GM10248 (cell line): ENCODE measurements at regions of chr1 and their contacts with region 1.

Region 1: DNA sequence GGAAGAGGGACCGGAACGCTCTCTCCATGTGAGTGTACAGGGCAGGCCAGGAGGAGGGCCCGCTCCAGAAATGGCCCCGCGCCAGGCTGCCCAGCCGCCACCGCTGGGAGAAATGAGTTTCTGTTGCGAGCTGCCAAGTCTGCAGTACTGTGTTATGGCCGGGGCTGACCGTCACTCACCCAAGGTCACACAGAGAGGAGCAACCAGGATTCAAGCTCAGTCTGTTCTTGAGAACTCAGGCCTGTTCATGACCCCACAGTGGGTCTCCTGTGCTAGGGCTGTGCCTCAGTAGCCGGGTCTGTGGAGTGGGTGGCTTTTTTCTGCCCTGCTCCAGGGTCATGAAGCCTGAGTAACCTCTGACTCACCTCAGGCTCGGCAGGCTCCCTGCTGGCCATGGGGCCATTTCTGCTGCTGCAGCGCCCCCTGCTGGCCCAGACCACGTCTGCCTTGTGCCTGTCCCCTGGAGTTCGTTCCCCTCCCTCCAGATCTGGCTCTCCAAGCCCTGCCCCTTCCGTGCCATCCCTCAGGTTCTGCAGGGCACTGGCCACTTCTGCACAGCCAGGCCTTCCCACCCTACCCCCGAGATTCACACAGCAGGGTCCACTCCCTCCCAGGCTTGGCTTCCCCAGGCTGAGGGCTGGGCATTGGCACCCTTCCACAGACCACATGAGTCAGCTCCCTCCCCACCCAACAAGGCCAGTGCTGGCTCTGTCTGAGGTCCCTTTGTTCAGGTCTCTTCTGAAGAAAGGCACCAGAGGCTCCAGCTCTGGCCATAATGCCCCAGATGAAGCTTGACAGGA is 51.8 kb downstream of the EDN2 start:
- DNase-seq: peak; percentile 88
- CTCF ChIP-seq: peak; percentile 90

Region 2: DNA sequence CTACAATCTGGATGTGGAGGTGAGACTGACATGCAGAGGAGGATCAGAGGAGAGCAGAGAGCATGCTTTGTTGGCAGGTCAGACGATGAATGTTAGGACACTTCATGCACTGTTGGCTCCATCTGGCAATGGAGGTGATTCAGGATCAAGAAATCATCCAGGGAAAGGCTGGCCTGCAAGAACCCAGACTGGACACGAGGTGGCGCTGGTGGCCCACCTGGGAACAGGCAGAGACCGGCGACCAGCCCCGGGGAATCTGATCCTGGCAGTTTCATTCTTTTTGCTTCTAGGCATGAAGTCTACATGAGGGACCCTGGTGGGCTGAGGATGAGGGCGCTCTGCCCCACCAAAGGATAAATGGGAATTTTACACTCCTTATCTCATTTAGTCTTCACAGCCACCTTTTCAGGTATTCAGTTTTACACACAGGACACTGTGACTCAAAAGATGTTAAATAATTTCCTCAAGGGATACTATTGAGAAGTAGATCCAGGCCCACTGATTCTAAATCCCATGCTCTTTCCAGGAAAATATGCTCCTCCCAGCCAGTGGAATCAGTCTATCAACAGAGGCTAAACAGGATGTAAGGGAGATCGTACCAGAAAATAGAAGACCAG is 164.4 kb before region 1 on chr1:
- CTCF ChIA-PET with region 1: interaction called, 15 read pairs
- POLR2A ChIA-PET with region 1: no interaction called
- DNase-seq: peak; percentile 83
- CTCF ChIP-seq: peak; percentile 95

Region 3: DNA sequence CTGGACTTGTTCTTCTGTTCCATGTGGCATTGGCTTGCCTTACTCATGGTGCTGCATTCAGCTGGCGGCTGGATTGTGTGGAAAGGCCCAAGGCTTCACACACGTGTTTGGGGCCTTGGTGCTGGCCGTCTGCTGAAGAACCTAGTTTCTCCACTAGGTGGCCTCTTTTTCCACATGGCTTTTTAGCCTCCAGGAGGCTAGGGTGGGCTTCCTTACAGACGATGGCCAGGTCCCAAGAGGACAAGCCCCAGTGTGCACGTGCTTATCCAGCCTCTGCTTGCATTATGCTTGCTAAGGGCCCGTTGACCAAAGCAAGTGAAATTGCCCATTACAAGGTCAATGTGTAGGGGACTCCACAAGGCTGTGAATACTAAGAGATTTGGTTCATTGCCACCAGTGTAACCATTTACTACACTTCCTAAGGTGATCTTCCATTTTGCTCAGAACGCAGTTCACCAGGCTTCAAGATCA is 119.0 kb before region 1 on chr1:
- CTCF ChIA-PET with region 1: interaction called, 22 read pairs
- POLR2A ChIA-PET with region 1: no interaction called
- DNase-seq: peak; percentile 44
- CTCF ChIP-seq: peak; percentile 50

Region 4: GRCh38 chr1:41371630-41372599 is 60.8 kb before region 1 on chr1:
- CTCF ChIA-PET with region 1: no interaction called
- POLR2A ChIA-PET with region 1: no interaction called
- DNase-seq: no peak
- CTCF ChIP-seq: no peak

Region 5: DNA sequence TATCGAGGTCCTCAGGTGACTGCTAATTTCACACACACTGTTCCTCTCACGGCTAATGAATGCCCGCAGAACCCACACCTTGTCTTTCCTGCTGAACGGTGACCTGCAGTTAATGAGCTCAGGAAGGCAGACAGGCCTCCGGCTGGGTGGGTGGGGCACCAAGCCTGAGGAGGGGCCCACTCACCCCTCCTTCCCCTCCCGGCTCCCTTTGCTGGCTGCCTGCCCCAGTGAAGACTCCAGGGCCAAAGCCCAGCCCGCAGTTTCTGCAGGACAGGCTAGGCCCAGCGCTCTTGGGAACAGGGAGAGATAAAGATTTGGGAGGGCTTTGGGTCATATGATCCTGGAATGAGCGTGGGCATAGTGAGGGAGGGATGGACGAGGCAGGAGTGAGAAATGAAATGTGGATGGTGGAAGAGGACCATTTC is 45.0 kb before region 1 on chr1:
- CTCF ChIA-PET with region 1: no interaction called
- POLR2A ChIA-PET with region 1: no interaction called
- DNase-seq: no peak
- CTCF ChIP-seq: no peak

Region 6: GRCh38 chr1:41408691-41409090 is 24.0 kb before region 1 on chr1:
- CTCF ChIA-PET with region 1: no interaction called
- POLR2A ChIA-PET with region 1: no interaction called
- DNase-seq: no peak
- CTCF ChIP-seq: no peak

Region 7: GRCh38 chr1:41444246-41444645 is 11.6 kb after region 1 on chr1:
- CTCF ChIA-PET with region 1: interaction called, 15 read pairs
- POLR2A ChIA-PET with region 1: no interaction called
- DNase-seq: no peak
- CTCF ChIP-seq: no peak

Region 8: DNA sequence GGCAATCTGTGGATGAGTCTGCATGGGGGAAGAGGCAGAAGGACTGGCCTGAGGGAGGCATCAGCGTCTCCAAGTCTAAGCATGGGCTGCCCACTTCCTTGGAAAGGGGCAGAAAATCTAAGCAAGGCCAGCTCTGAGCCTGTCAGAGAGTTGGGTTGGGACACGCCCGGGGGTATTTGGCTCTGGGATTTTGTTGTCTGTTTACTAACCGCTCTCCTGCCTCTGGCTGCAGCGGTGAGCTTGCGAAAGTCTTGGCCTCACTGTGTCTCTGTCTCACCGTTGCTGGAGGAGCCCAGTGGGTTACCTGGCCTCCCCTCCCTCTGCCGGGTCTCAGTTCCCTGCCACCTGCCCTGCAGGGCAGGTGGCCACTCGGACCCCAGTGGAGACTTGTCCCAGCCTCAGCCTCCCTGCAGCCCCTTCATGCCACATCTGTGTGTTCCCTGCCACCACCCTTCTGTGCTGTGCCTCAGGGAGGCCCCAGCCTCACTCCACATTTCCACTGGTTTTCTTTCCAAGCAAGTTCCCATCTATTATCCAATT is 18.1 kb after region 1 on chr1:
- CTCF ChIA-PET with region 1: interaction called, 16 read pairs
- POLR2A ChIA-PET with region 1: no interaction called
- DNase-seq: no peak
- CTCF ChIP-seq: no peak

Region 9: GRCh38 chr1:41482001-41482765 is 49.5 kb after region 1 on chr1:
- CTCF ChIA-PET with region 1: no interaction called
- POLR2A ChIA-PET with region 1: no interaction called
- DNase-seq: no peak
- CTCF ChIP-seq: no peak